Heart right ventricle (tissue), 16 donors: ENCODE measurements at regions of chr22 and their contacts with region 1.

Region 1: DNA sequence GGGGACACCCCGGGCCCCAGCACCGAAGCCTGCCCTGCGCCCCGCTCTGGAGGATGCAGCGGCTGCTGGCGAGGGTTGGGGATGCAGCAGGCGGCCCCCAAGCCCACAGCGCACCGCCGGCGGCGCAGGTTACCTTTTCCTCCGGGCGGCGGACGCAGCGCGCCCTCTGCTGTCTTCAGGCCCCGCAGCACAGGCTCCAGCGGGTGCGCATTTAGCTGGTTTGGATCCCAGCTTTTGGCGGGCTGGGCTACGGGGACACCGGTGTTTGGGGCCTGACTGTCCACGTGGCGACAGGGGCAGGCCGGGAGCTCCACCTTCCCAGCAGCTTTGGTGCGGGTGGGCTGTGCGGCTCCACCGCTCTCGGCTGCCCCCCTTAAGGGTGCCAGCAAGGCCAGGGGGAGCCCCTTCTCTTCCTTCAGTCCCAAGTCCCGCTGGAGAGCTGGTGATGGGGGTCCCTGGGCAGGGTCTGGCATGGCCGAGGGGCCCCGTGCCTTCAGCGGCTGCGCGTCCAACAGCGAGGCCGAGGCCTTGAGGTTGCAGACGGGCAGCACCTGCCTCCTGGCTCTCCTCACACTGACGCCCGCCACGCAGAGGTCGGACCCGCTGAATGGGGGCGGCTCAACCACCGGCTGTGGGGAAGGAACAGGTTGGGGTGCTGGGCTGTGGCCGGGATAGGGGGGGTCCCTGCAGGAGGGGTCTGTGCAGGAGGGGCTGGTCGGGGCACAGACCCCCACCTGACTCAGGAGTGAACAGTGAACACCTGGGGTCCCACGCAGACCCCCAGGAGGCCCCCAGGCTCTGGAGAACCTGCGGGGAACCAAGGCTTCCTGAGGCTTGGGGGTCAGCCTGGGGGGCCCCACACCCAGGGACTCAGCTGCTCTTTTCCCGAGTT is 18.0 kb upstream of the IL17REL start:
- DNase-seq: peak; percentile 58 to 71
- ATAC-seq: peak; percentile 83 to 93 (median 88)
- H3K4me3 ChIP-seq: no peak overlapping the region
- H3K27ac ChIP-seq: no peak overlapping the region
- H3K4me1 ChIP-seq: peaks cover 0 to 9% (median 5%) of the 10 kb centered on the region in 9 donors
- H3K27me3 ChIP-seq: peaks cover 0 to 72% (median 50%) of the 10 kb centered on the region in 7 donors
- CTCF ChIP-seq: peak; percentile 84 to 93 (median 88)

Region 2: DNA sequence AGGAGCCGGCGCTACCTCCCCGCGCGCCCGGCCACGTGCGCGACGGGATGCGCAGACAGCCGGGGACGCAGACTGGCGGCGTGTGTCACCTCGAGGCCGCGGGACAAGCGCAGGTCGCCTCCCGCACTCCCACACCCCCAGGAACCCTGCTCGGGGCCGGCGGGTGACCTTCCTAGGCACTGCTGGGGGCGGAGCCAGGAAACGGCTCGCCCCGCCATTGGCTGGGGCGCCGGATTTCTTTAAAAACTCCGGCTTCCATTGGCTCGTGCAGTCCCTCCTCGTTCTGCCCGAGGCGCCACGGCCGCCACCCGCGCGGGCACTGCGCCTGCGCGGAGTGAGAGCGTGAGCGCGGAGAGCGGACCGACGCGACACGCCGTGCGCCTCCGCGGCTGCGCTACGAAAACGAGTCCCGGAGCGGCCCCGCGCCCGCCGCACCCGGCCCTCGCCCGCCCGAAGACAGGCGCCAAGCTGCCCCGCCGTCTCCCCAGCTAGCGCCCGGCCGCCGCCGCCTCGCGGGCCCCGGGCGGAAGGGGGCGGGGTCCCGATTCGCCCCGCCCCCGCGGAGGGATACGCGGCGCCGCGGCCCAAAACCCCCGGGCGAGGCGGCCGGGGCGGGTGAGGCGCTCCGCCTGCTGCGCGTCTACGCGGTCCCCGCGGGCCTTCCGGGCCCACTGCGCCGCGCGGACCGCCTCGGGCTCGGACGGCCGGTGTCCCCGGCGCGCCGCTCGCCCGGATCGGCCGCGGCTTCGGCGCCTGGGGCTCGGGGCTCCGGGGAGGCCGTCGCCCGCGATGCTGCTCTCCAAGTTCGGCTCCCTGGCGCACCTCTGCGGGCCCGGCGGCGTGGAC is 70.2 kb before region 1 on chr22 and contains the start of gene PIM3:
- intact Hi-C with region 1: no loop called
- DNase-seq: peak; percentile 94 to 95
- ATAC-seq: peak; percentile 79 to 94 (median 88)
- H3K4me3 ChIP-seq: peak within 1 kb of the TSS; percentile 82 to 97 (median 89)
- H3K27ac ChIP-seq: peak within 1 kb of the TSS; percentile 86 to 100 (median 98)
- H3K4me1 ChIP-seq: peaks cover 33 to 61% (median 51%) of the 10 kb centered on the region in 9 donors
- H3K27me3 ChIP-seq: no peaks in the 10 kb centered on the region
- CTCF ChIP-seq: no peak
- total RNA-seq, gene PIM3: 27.4 to 81.6 (median 41.6) TPM

Region 3: DNA sequence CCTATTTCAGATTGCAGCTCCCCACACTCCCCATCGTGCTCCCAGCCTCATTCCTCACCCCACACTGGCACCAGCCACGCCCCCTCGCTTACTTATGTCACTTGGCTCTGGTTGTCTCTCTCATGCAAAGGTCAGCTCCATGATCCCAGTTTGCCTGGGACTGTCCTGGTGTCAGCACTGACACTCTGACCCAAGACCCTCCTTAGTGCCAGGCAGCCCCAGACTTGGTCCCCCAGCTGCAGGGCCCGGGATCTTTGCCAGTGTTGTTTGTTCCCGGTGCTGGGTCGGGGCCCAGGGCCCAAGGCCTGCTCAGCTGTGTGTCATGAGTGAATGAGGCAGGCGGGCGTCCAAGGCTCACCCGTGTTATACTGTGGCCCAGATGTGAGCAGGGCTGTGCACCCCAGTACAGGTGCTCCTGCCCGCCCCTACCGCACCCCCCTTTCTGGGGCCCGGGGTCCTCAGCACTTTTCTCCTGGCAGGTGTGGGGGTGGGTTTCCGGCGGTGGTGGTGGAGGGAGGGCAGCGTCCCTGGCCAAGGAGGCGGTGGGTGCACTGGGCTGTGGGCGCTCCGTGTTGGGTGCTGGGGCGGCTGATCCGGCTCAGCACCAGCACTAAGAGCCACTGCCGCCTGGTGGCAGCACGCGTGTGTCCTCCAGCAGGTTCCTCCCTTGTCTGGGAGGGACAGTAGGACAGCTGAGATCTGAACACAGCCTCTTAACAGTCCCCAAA is 37.5 kb before region 1 on chr22:
- intact Hi-C with region 1: loop called in 1 of 10 experiments (anchors 5 kb)
- DNase-seq: peak; percentile 54 to 73
- ATAC-seq: peak; percentile 73 to 90 (median 85)
- H3K4me3 ChIP-seq: no peak overlapping the region
- H3K27ac ChIP-seq: no peak overlapping the region
- H3K4me1 ChIP-seq: peaks cover 0 to 9% (median 2%) of the 10 kb centered on the region in 9 donors
- H3K27me3 ChIP-seq: no peaks in the 10 kb centered on the region
- CTCF ChIP-seq: peak; percentile 61 to 84 (median 72)

Region 4: DNA sequence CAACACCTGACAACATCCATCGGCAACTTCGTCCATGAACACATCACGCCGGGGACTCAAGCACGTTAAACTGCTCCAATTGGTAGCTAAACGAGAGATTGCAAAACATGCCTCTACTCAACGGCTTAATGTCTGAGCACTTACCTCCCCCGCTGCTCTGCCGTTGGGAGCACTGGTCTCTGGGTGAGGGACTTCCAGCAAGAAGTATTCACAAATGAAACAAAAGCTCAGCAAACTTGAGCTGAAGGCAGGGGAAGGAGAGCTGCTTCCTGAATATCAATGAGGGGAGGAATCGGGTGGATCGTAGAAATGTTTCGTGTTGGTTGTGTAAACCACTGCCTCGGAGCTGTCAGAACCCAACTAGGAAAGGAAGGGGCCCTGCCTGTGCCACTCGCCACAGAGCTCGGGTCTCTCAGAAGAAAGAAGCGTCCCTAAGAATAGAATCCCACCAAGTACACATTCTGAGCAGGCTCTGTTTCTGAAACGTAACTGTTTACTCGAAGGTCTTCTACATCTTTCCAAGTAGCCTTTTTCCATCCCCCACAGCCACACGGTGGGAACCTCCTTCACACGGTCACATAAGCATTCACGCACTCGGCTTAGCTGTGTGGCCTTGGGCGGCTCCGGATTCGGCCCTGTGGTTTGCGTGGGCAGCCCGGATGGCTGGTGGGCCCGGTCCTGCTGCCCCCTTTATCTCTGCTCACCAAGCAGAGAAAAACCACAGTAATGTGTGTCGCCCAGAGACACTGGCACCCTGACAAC is 54.8 kb after region 1 on chr22 and contains the start of gene MLC1:
- intact Hi-C with region 1: no loop called
- DNase-seq: no peak
- ATAC-seq: no peak
- H3K4me3 ChIP-seq: peak within 1 kb of the TSS in 2 of 10 donors; percentile 4 to 23
- H3K27ac ChIP-seq: peak within 1 kb of the TSS in 1 of 10 donors; percentile 10
- H3K4me1 ChIP-seq: peaks cover 0 to 7% (median 0%) of the 10 kb centered on the region in 9 donors
- H3K27me3 ChIP-seq: peaks cover 8 to 77% (median 57%) of the 10 kb centered on the region in 7 donors
- CTCF ChIP-seq: no peak
- total RNA-seq, gene MLC1: 0.11 to 1.6 (median 0.37) TPM in 6 of 10 donors, not detected in the others